Sigmoid colon (tissue), 7 donors: ENCODE measurements at regions of chr7 and their contacts with region 1.

Region 1: DNA sequence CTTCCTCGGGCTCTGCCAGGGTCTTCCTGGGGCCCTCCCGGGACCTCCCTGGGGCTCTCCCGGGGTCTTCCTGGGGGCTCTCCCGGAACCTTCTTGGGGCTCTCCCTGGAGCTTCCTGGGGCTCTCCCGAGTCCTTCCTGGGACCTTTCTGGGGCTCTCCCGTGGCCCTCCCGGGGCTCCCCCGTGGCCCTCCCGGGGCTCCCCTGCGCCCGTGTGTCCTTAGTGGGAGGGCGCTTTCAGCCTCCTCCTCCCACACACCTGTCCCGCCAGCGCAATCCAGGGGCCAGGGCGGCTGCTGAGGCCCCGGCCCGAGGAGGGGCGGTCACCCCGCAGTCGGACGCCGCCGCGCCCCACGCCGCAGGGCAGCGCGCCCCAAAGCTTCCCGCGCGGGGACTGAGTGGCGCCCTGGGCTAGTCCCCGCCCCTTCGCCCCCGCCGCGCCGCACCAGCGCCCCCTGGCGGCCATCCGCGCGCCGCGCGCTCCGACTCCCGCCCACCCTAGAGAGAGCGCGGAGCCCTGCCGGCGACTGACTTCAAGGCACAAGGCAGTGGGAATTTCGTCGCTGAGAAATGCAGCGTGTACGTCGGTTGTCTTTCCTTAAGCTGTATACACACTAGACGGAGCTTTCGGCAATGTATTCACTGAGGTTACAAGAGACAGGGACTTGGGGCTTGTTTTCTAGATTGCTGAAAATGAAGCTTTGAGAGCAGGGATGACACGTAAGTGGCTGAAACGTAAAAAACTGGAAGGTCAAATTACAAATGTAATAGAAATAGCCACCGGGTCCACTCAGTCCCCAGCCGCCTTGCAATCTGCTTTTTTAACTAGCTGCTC is 47.1 kb downstream of the INSIG1 start:
- DNase-seq: peak; percentile 87
- H3K4me3 ChIP-seq: peak overlapping the region in 3 of 4 donors; percentile 38 to 43 (median 42)
- H3K27ac ChIP-seq: no peak overlapping the region
- H3K4me1 ChIP-seq: peaks cover 0 to 11% (median 10%) of the 10 kb centered on the region in 4 donors
- H3K27me3 ChIP-seq: peaks cover 4 to 27% (median 14%) of the 10 kb centered on the region in 3 donors
- CTCF ChIP-seq: peak; percentile 46 to 94 (median 75)
- EP300 ChIP-seq: no peak
- POLR2A ChIP-seq: no peak

Region 2: DNA sequence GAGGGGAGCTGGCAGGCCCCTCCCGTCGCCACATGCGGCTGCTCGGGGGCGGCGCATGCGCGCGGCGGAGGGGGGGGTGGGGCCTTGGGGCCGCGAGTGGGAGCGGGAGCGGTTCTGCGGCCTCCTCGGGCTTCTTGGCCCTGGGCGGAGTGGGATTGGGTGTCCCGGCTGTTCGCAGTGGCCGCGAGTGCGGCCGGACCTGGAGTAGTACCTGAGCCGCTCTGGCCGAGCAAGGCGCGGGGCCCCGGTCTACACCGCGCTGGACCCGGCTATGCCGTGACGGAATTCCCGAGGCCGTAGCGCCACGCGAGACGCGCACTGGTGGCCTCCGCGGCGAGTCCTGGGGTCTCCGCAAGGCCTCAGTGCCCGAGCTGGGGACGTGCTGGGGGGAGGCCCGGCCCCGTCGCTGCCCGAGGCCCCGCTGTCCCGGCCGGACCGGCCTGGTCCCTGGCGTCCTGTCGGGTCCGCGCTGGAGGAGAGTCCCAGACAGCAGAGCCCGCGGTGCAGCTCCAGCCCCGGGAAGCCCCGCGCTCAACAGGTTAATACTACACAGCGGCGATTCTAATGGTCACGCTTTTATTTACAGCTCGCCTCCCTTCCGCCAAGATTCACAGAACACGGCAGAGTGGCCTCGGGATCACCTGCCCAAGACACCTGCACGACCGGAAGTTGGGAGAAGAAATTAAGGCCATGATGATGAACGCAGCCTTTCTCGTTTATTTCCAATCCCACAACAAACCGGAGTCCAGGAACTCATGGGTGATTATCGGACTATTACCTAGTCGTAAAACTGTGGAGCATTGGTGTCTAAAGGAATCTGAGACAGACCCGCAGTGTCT is 341.2 kb before region 1 on chr7:
- intact Hi-C with region 1: loop called (anchors 10 kb)
- DNase-seq: peak; percentile 90
- H3K4me3 ChIP-seq: peak overlapping the region; percentile 83 to 100 (median 98)
- H3K27ac ChIP-seq: peak overlapping the region; percentile 91 to 95 (median 92)
- H3K4me1 ChIP-seq: peaks cover 0 to 22% (median 19%) of the 10 kb centered on the region in 4 donors
- H3K27me3 ChIP-seq: no peaks in the 10 kb centered on the region
- CTCF ChIP-seq: no peak
- EP300 ChIP-seq: no peak
- POLR2A ChIP-seq: peak; percentile 50 to 87

Region 3: GRCh38 chr7:155190688-155191087 is 154.1 kb before region 1 on chr7:
- intact Hi-C with region 1: loop called (anchors 1 kb)
- DNase-seq: no peak
- H3K4me3 ChIP-seq: no peak overlapping the region
- H3K27ac ChIP-seq: no peak overlapping the region
- H3K4me1 ChIP-seq: no peaks in the 10 kb centered on the region
- H3K27me3 ChIP-seq: peaks cover 0 to 26% (median 0%) of the 10 kb centered on the region in 3 donors
- CTCF ChIP-seq: peak; percentile 65 to 92 (median 76)
- EP300 ChIP-seq: no peak
- POLR2A ChIP-seq: no peak

Region 4: DNA sequence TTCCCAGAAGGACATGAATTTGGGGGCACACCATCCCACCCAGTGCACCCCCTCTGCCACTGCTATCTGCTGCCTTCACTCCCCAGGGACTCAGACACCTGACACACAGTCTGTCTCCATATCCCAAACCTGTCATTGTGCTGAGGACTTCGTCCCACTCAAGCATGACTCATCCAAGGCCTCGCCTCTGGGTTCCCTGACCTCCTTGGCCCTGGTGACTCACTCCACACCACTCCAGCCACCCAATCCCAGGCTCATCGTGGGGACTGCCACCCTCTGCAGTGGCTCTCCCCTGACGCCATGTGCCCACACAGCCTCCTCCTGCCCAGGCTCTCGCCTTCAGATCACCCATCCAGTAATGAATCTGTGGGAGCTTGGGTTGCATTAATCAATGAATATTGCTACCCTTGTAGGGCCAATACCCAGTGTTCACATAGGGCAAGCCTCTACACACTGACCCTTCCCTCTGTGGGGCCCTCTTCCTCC is 53.7 kb before region 1 on chr7:
- intact Hi-C with region 1: no loop called
- DNase-seq: no peak
- H3K4me3 ChIP-seq: no peak overlapping the region
- H3K27ac ChIP-seq: no peak overlapping the region
- H3K4me1 ChIP-seq: no peaks in the 10 kb centered on the region
- H3K27me3 ChIP-seq: no peaks in the 10 kb centered on the region
- CTCF ChIP-seq: no peak
- EP300 ChIP-seq: no peak
- POLR2A ChIP-seq: no peak

Region 5: DNA sequence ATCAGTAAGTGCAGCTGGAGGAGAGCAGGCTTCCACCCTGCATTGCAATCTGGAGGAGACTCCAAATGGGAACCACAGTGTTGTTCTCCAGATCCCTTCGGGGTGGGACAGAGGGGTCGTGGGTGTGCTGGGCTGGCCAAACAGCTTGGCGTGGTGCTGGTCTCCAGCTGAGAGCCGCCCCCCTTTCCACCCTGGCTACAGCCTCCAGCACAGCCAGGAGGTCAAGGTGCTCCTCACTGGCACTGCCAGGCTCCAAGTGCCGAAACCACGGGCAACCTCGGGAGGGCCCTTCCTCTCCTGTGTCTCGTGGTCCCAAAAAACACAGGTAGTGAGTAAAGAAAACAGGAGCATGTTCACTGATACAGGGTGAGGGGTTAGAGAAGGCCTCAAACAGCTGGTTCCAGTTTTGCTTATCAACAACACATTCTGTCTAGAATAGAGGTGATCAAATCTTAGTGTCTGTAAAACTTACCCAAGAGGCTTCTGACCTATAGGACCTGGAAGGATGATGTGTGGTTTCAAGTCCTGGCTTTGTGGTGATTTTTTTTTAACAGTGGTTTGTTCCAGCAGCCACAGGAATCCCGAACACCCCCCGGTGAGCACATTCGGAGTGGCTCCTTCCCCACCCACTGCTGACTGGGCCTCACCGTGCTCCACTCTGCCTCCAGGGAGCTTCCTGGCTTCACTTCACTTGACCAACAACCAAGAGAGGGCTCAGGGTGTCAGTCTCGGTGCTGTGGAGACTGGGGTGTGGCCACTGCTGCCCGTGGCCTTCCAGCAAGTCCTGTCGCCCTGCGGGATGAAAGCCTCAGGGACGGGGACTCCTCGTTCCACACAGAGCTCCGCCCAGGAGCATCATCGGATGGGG is 82.0 kb after region 1 on chr7:
- intact Hi-C with region 1: no loop called
- DNase-seq: no peak
- H3K4me3 ChIP-seq: no peak overlapping the region
- H3K27ac ChIP-seq: no peak overlapping the region
- H3K4me1 ChIP-seq: no peaks in the 10 kb centered on the region
- H3K27me3 ChIP-seq: peaks cover 0 to 44% (median 12%) of the 10 kb centered on the region in 3 donors
- CTCF ChIP-seq: no peak
- EP300 ChIP-seq: no peak
- POLR2A ChIP-seq: no peak